ENCODE measurements at regions of chr16 and their contacts with region 1.

Region 1: DNA sequence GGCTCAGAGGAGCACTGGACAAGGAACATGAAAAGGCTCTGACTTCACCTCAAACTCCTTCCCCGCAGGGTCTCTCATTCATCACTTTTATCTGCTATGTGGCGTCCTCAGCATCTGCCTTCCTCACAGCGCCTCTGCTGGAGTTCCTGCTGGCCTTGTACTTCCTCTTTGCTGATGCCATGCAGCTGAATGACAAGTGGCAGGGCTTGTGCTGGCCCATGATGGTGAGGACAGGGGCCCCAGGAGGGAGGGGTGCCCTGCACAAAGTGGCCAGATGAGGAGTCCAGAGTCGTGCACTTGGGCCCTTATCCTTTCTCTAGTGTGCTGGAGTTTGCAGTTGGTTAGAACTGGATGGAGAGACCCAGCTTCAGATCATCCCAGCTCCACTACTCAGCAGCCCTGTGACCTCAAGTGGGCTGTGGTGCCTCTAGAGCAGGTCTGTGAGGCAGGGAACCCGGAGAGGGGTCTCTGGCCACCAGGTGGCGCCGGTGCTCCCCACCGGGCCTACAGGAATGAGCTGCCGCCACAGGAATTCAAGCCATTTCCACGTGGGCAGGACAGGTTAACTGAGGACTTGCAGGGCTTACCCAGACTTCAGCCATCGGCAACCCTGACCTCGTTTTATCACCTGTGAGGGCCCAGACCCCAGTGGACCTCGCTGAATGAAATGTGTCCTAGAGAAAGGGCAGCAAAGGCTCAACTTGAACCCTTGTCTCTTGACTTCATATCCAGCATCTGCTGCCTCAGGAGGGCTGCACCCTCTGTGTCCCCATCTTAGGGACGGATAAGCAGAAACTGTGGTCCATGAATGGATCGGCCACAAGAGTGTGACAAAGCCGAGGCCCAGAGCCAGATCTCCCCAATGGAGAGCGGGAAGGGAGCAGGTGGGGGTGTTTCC is 4.0 kb downstream of the CMTM3 start:
- DNase-seq: peak; percentile 78 to 90
- H3K4me3 ChIP-seq: no peak overlapping the region
- H3K27ac ChIP-seq: no peak overlapping the region
- H3K4me1 ChIP-seq: peaks cover 14% of the 10 kb centered on the region
- H3K27me3 ChIP-seq: no peaks in the 10 kb centered on the region
- CTCF ChIP-seq: peak; percentile 92

Region 2: DNA sequence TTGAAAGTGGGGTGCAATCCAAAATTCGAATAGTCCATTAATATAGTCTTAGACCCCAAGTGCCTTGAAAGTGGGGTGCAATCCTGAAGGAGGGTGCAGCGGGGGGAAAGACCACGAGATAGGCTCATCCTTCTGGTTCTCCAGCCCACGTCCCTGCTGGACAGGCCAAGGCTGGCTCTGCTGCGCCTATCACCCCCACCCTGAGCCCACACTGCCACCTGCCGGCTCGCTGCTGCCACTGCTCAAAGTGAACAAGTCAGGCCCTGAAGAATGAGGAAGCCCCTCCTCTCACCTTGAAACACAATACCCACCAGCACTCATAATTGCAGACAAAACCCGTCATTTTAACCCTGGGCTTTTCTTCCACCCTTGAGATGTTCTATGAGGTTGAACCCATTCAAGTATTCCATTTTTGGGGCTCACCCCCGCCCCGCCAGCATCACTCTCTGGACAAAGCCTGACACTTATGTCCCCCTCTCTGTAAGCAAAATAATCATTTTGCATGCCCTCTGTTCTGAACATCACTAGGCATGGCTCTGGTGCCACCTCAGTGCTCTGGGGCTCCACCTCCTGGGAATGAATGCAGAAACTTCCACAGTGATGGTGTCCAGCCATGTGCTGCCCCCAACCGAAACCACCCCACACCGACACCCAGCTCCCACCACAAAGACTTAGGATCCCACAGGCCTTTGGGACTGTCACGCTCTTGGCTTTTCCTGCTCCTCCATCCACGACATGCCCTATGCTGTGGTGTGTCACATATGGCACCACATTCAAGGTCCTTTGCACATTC is 124.6 kb before region 1 on chr16:
- CTCF ChIA-PET with region 1: no interaction called
- POLR2A ChIA-PET with region 1: no interaction called
- intact Hi-C with region 1: loop called (anchors 1 kb)
- DNase-seq: peak; percentile 74 to 82
- H3K4me3 ChIP-seq: no peak overlapping the region
- H3K27ac ChIP-seq: no peak overlapping the region
- H3K4me1 ChIP-seq: peaks cover 56% of the 10 kb centered on the region
- H3K27me3 ChIP-seq: no peaks in the 10 kb centered on the region
- CTCF ChIP-seq: peak; percentile 93

Region 3: DNA sequence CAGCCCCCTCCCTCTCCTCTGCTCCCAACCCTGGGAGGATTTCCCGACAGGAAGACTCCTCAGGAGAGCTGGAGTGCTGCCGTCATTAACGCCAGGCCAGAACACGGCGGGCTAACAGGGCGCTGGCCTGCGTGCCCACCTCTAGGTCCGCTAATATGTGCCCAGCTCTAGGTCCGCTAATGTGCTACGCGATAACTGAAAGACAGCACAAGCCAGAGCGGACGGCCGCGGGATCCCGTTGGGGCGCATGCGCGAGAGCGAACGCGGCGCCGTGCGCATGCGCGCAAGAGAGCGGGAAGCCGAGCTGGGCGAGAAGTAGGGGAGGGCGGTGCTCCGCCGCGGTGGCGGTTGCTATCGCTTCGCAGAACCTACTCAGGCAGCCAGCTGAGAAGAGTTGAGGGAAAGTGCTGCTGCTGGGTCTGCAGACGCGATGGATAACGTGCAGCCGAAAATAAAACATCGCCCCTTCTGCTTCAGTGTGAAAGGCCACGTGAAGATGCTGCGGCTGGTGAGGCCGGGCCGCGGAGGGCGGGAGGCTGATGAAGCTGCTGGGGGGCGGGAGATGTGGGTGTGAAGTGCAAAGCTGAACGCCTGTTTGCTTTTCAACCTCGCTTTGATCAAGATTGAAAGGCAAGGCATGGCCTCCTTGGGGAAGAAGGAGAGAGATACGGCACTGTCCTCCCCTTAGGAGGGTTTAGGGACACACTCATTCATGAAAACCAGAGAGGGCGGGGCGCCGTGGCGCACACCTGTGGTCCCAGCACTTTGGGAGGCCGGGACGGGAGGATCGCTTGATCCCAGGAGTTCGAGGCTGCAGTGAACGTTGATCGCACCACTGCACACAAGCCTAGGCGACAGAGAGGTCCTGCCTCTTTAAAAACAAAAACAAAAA is 56.0 kb before region 1 on chr16 and contains the start of gene CKLF:
- CTCF ChIA-PET with region 1: no interaction called
- POLR2A ChIA-PET with region 1: no interaction called
- intact Hi-C with region 1: loop called (anchors 5 kb)
- DNase-seq: peak; percentile 75 to 91
- H3K4me3 ChIP-seq: peak within 1 kb of the TSS; percentile 66
- H3K27ac ChIP-seq: no peak within 1 kb of the TSS
- H3K4me1 ChIP-seq: peaks cover 30% of the 10 kb centered on the region
- H3K27me3 ChIP-seq: no peaks in the 10 kb centered on the region
- CTCF ChIP-seq: no peak
- total RNA-seq, gene CKLF: 77.1 and 86.4 TPM in 2 replicates

Region 4: DNA sequence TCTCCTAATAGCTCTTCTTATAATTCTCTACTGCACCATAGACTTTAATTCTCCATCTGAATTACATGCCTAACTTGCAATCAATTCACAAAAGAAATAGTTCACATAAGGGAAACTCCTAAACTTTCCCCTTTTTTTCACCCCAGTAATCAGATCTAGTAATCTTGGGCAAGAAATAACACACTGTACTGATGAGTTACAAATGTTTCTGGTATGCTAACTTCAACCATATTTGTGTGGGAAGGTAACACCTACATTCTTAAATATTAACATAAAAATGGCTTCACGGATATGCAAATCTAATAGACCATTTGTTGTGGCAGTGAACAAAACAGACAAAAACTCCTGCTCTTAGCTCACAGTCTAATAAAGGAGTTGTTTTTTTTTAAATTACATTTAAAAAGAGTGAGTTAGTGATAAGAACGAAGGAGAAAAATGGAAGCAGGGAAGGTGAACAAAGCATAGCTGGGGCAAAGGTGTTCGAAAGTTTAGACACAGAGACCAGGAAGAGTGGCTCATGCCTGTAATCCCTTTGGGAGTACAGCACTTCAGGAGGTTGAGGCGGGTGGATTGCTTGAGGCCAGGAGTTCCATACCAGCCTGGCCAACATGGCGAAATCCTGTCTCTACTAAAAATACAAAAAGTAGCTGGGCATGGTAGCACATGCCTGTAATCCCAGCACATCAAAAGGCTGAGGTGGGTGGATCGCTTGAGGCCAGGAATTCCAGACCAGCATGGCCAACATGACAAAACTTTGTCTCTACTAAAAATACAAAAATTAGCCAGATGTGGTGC is 30.8 kb after region 1 on chr16:
- CTCF ChIA-PET with region 1: no interaction called
- POLR2A ChIA-PET with region 1: no interaction called
- intact Hi-C with region 1: no loop called
- DNase-seq: peak; percentile 14 to 61
- H3K4me3 ChIP-seq: no peak overlapping the region
- H3K27ac ChIP-seq: 0 out of 2 replicates have a peak overlapping the region, but pooled peaks have one; percentile 4
- H3K4me1 ChIP-seq: no peaks in the 10 kb centered on the region
- H3K27me3 ChIP-seq: no peaks in the 10 kb centered on the region
- CTCF ChIP-seq: no peak

Region 5: DNA sequence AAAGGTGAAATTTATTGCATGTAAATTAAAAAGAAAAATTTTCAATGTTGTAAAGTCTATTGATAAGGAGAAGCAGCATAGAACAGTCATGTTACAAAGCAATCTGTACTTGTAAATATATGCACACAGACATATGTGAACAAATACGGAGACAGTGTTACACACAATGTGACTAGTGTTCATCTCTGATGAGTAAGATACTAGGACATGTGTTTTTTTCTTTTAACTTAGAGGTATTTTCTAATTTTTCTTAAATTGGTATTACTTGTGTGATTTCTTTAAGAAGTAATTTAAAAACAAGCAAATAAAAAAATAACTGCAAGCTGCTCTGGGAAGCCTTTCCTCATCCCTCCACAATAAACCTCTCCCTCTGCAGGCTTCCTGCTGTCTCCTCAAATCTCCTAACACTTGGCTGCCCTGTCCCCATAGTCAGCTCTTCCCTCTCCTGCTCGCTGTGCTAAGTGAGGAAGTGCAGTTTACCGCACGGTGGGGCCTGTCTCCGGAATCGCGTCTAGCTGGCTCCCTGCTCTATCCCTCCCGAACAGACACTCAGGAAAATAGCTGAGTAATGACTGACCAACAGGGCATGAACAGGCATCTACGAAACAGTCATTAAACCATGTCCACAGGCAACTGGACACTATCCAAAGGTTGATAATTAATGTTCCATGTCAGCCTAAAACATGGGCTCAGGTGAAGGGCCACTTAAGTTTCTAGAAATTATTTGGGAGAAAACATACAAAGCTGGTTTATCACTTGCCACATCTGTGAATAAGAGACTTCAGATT is 52.1 kb after region 1 on chr16:
- CTCF ChIA-PET with region 1: interaction called, 4 read pairs
- POLR2A ChIA-PET with region 1: interaction called, 4 read pairs
- intact Hi-C with region 1: loop called (anchors 2 kb)
- DNase-seq: peak in 1 of 2 experiments; percentile 69
- H3K4me3 ChIP-seq: no peak overlapping the region
- H3K27ac ChIP-seq: peak overlapping the region; percentile 49; the same call in 1 of the 2 replicates
- H3K4me1 ChIP-seq: no peaks in the 10 kb centered on the region
- H3K27me3 ChIP-seq: no peaks in the 10 kb centered on the region
- CTCF ChIP-seq: no peak

Region 6: GRCh38 chr16:66696669-66697630 is 88.5 kb after region 1 on chr16 and contains the start of gene CMTM4:
- CTCF ChIA-PET with region 1: no interaction called
- POLR2A ChIA-PET with region 1: no interaction called
- intact Hi-C with region 1: loop called (anchors 2 kb)
- DNase-seq: peak; percentile 62 to 90
- H3K4me3 ChIP-seq: peak within 1 kb of the TSS; percentile 91
- H3K27ac ChIP-seq: peak within 1 kb of the TSS; percentile 30; the same call in 1 of the 2 replicates
- H3K4me1 ChIP-seq: peaks cover 32% of the 10 kb centered on the region
- H3K27me3 ChIP-seq: no peaks in the 10 kb centered on the region
- CTCF ChIP-seq: no peak; the same call in 1 of the 2 replicates
- total RNA-seq, gene CMTM4: 81.3 and 105 TPM in 2 replicates

Region 7: DNA sequence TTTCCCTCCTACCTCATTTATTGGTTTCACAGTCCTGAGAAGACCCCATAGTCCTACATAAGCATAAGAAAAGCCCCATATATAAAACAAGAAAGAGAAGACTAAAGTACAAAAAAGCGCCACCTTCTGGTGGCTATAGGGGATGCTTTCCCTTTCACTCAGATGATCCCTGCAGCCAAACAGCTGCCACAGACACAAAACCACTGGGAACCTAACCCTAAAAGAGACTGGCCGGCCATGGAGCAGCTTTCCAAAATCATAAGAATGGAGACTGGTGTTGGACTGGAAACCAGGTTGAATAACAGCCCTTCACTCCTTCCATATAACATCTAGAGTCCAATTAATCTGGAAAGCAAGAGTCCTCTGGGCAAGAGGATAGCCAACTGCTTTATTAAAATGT is 131.5 kb after region 1 on chr16:
- CTCF ChIA-PET with region 1: interaction called, 4 read pairs
- POLR2A ChIA-PET with region 1: no interaction called
- intact Hi-C with region 1: loop called (anchors 5 kb)
- DNase-seq: no peak
- H3K4me3 ChIP-seq: no peak overlapping the region
- H3K27ac ChIP-seq: no peak overlapping the region
- H3K4me1 ChIP-seq: peaks cover 36% of the 10 kb centered on the region
- H3K27me3 ChIP-seq: no peaks in the 10 kb centered on the region
- CTCF ChIP-seq: peak; percentile 76

Region 8: GRCh38 chr16:66880288-66881013 is 272.0 kb after region 1 on chr16 and contains the start of gene PDP2:
- CTCF ChIA-PET with region 1: interaction called, 8 read pairs
- POLR2A ChIA-PET with region 1: interaction called, 16 read pairs
- intact Hi-C with region 1: no loop called
- DNase-seq: peak; percentile 86 to 95
- H3K4me3 ChIP-seq: peak within 1 kb of the TSS; percentile 99
- H3K27ac ChIP-seq: no peak within 1 kb of the TSS
- H3K4me1 ChIP-seq: peaks cover 13% of the 10 kb centered on the region; the same call in 1 of the 2 replicates
- H3K27me3 ChIP-seq: no peaks in the 10 kb centered on the region
- CTCF ChIP-seq: no peak
- total RNA-seq, gene PDP2: 17.4 and 21.6 TPM in 2 replicates